ENCODE measurements at regions of chr7 and their contacts with region 1.

Region 1: DNA sequence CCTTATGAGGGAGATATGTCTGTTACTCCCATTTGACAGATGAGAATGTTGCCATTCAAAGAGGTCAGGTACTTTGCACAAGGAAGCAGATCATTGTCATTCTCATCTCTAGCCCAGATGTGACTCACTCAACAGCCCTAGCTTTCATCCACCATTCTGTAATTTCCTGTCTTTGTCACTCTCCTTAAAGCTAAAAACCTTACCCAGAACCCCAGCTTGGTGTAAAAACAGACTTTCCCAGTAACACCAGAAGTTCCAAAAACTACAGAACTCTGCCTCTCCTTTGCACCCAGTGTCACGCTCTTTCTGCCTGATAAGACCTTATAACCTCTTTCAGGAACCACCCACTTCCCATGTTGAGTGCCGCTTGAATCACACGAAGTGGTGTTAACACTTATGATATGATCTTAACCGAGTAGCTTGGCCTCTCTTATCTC is 89.1 kb upstream of the SP4 start:
- DNase-seq: peak; percentile 79
- H3K4me3 Mint-ChIP-seq: peak overlapping the region; percentile 31
- H3K27ac Mint-ChIP-seq: peak overlapping the region; percentile 96
- H3K4me1 Mint-ChIP-seq: peaks cover 37% of the 10 kb centered on the region
- H3K27me3 Mint-ChIP-seq: no peaks in the 10 kb centered on the region

Region 2: DNA sequence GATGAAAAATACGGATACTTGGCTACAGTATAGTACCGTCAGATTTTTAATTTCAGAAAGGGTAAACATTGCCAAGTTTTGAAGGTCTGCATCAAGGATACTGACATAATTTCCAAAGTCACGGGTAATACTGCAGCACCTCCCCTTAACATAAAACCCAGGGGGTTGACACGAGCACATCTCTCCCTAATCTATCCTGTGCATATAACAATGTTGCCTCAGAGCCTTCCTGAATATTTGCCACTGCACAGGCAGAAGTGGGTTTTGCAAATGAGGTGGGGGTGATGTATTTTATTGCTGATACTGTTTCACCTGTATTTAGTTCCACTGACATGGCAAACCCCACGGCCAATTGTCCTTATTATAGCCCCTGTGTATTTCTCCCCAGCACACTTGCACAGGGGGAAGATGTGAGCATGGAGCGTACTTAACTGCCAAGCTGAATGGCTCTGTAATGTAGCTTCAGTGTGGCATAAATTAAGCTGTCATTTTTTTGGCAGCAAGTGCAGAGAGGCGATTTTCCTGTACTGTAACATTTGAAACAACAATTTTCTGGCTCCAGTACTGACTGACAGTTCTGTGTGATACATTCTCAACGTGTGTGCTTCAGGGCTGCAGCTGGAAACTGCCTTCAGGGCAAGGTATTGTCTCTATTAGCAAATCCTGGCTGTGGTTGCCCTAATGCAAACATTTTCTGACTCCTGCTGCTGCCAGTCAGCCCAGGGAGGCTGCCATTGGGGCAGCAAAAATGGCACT is 210.5 kb before region 1 on chr7:
- CTCF ChIA-PET with region 1: no interaction called
- POLR2A ChIA-PET with region 1: no interaction called
- intact Hi-C with region 1: no loop called
- DNase-seq: no peak
- H3K4me3 Mint-ChIP-seq: no peak overlapping the region
- H3K27ac Mint-ChIP-seq: no peak overlapping the region
- H3K4me1 Mint-ChIP-seq: no peaks in the 10 kb centered on the region
- H3K27me3 Mint-ChIP-seq: peaks cover 15% of the 10 kb centered on the region

Region 3: DNA sequence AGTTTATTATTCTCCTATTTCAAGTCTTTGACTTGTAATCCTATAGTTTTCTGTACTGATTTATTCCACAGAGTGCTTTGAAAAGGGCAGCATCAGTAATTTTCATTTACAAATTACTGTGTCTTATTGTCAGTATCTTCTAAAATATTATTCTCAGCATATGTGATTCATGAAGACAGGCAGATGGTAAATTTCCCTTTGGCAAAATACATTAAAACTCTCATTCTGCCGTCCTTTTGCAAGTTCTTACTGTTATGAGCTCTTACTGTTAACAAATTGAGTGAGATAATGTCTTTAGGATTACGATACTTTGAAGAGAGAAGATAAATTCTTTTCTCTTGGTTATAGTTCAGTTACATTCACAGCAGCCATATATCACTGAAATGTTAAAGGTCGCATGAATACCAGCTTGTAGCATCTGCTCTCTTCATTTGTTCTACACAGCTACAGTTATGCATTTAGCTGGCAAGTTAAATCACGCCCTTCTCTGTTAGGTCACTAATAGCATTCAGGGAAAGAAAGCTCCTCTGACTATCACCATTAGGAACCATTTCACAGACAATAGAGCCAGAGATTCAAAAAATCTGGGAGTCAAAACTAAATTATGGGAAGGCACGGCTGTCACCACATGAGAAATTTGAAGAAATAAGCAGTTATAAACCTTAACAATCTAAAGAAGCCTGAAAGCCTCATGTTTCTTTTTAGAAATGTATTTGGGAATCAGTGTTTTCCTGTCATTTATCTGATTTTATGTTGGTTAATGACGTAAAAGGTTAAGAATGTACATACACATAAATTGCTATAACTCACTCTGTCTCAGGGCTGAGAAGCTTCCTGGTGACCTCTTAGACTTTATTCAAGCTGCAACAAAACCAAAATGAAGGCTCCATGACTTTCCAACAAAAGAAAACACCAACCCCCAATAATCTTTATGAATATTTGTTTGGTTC is 20.5 kb before region 1 on chr7:
- CTCF ChIA-PET with region 1: no interaction called
- POLR2A ChIA-PET with region 1: no interaction called
- intact Hi-C with region 1: no loop called
- DNase-seq: no peak
- H3K4me3 Mint-ChIP-seq: no peak overlapping the region
- H3K27ac Mint-ChIP-seq: no peak overlapping the region
- H3K4me1 Mint-ChIP-seq: no peaks in the 10 kb centered on the region
- H3K27me3 Mint-ChIP-seq: no peaks in the 10 kb centered on the region

Region 4: DNA sequence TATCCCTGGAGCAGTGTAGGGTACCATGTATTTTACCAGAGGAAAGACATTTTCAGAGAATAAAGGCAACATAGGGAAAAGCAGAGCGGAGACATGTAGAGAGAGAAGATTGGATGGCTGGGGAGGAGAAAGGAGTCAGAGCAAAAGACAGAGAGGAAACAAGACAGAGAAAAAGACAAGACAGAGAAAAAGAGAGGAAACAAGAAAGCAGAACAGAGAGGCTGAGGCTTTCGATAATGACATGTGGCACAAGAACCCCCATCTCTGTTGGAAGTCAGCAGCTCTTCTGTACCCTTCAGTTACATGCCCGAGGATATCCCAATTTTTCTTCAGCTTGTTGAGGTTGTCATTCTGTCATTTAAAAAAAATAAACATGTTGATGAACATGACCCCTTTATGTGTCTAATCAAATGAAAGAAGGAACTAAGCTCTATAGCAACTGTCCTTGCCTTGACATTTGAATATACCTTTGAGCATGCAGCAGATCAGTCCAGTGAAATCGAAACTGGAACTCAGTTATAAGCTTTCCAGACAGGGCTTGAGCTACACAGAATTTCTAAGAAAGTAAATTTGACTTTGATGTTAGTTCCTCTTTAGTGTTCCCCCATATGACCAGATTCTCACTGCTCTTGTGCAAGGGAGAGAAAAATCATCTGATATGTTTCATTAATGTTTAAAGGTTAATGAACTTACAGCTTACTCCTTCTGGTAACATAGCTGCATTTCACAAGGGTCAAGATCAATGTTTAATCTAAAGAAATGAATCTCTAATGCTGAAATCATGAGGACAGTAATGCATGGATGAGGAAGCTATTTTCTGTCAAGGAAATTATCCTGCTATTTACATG is 14.0 kb after region 1 on chr7:
- CTCF ChIA-PET with region 1: interaction called, 9 read pairs
- POLR2A ChIA-PET with region 1: interaction called, 29 read pairs
- intact Hi-C with region 1: loop called (anchors 1 kb)
- DNase-seq: no peak
- H3K4me3 Mint-ChIP-seq: peak overlapping the region; percentile 39
- H3K27ac Mint-ChIP-seq: peak overlapping the region; percentile 77
- H3K4me1 Mint-ChIP-seq: peaks cover 55% of the 10 kb centered on the region
- H3K27me3 Mint-ChIP-seq: no peaks in the 10 kb centered on the region

Region 5: GRCh38 chr7:21557661-21558060 is 218.9 kb after region 1 on chr7:
- CTCF ChIA-PET with region 1: no interaction called
- POLR2A ChIA-PET with region 1: no interaction called
- intact Hi-C with region 1: no loop called
- DNase-seq: no peak
- H3K4me3 Mint-ChIP-seq: no peak overlapping the region
- H3K27ac Mint-ChIP-seq: no peak overlapping the region
- H3K4me1 Mint-ChIP-seq: no peaks in the 10 kb centered on the region
- H3K27me3 Mint-ChIP-seq: peaks cover 4% of the 10 kb centered on the region